T-cell (primary cell): ENCODE measurements at regions of chr9 and their contacts with region 1.

Region 1: GRCh38 chr9:37496020-37496419 is 10.3 kb downstream of the POLR1E start:
- DNase-seq: no peak
- ATAC-seq: no peak
- H3K4me3 ChIP-seq: no peak overlapping the region
- H3K4me3 Mint-ChIP-seq: no peak overlapping the region
- H3K27ac ChIP-seq: no peak overlapping the region
- H3K27ac Mint-ChIP-seq: no peak overlapping the region
- H3K4me1 ChIP-seq: no peaks in the 10 kb centered on the region
- H3K4me1 Mint-ChIP-seq: peaks cover under 1 to 1% (median 1%) of the 10 kb centered on the region in 3 donors
- H3K27me3 ChIP-seq: no peaks in the 10 kb centered on the region
- H3K27me3 Mint-ChIP-seq: no peaks in the 10 kb centered on the region

Region 2: DNA sequence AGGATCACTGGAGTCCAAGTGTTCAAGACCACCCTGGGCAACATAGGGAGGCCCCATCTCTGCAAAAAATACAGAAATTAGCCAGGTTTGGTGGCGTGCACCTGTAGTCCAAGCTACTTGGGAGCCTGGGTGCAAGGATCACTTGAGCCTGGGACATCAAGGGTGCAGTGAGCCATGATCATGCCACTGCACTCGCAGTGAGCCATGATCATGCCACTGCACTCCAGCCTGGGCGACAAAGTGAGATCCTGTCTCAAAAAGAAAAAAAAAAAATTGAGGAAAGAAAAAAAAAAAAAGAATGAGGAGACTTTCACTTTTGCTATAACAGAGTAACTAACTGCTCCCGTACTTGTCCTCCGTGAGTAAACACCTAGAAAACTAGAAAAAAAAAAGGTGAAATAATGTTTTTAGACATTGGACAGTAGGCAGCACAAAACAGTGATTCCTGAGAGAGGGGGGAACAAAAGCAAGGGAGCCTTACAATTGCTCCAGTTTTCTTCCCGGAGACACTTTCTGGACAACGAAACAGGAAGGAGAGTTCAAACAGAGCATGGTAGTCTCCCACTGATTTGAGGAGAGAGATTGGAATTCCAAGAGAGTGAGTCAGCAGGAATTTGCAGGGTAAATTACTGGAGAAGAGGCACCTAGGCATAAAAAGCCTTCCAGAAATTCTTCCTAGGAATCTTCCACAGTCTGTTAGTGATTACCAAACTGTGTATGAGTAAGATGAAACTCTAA is 23.9 kb before region 1 on chr9:
- CTCF ChIA-PET with region 1: no interaction called
- POLR2A ChIA-PET with region 1: no interaction called
- DNase-seq: no peak
- ATAC-seq: peak in 2 of 4 experiments; percentile 29 to 44
- H3K4me3 ChIP-seq: peak overlapping the region in 1 of 2 donors; percentile 10
- H3K4me3 Mint-ChIP-seq: peak overlapping the region; percentile 71 to 78 (median 76)
- H3K27ac ChIP-seq: no peak overlapping the region
- H3K27ac Mint-ChIP-seq: peak overlapping the region; percentile 81 to 85
- H3K4me1 ChIP-seq: peaks cover 0 to 4% of the 10 kb centered on the region in 2 experiments
- H3K4me1 Mint-ChIP-seq: peaks cover 12 to 15% (median 14%) of the 10 kb centered on the region in 3 donors
- H3K27me3 ChIP-seq: peaks cover 0 to 8% of the 10 kb centered on the region in 2 experiments
- H3K27me3 Mint-ChIP-seq: peaks cover 6% of the 10 kb centered on the region in 2 donors

Region 3: DNA sequence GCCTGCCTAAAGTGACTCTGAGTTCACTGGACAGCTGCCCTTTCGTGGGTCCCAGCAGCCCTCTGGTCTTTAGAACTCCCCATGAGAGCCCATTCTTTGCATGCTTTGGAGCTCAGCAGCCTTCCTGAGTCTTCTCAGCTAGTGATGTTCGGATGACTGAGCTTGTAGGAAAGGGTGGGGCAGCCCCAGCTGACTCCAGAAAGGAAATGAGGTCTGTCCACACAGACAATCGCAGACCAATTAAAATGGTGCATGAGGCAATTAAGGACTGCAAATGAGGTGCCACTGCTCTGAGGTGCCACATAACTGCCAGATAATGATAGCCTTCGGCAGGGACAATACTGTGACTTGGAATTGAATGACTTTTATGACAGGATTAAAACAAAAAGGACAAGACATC is 121.8 kb after region 1 on chr9:
- CTCF ChIA-PET with region 1: no interaction called
- POLR2A ChIA-PET with region 1: interaction called in 1 of 2 experiments, 14 read pairs
- DNase-seq: no peak
- ATAC-seq: no peak
- H3K4me3 ChIP-seq: no peak overlapping the region
- H3K4me3 Mint-ChIP-seq: no peak overlapping the region
- H3K27ac ChIP-seq: no peak overlapping the region
- H3K27ac Mint-ChIP-seq: no peak overlapping the region
- H3K4me1 ChIP-seq: no peaks in the 10 kb centered on the region
- H3K4me1 Mint-ChIP-seq: no peaks in the 10 kb centered on the region
- H3K27me3 ChIP-seq: no peaks in the 10 kb centered on the region
- H3K27me3 Mint-ChIP-seq: peaks cover 0 to 14% of the 10 kb centered on the region in 2 donors

Region 4: DNA sequence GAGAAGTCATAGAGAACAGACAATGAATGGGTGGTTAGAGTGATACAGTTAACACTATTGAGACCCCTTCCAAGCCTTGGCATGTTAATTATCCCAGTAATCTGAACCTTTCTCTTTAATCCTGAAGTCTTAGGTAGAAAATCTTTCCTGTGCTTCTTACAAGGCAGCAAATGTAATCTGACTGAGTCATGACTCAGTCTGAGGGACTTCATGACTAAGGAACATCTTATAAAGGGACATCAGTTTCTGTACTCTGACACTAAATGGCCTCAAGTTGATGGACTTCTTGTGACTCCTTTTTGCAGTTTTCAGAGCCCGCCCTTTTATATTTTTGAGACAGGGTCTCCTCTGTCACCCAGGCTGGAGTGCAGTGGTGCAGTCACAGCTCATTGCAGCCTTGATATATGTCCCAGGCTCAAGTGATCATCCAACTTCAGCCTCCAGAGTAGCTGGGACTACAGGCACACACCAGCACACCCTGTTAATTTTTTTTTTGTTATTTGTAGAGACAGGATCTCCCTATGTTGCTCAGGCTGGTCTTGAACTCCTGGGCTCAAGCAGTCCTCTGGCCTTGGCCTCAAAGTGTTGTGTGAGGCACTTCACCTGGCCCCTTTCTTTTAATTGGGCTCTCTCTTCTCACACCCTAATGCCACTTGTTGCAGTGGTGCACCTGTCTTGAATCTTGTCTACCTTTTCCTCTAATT is 279.3 kb after region 1 on chr9:
- CTCF ChIA-PET with region 1: no interaction called
- POLR2A ChIA-PET with region 1: interaction called in 1 of 2 experiments, 11 read pairs
- DNase-seq: no peak
- ATAC-seq: no peak
- H3K4me3 ChIP-seq: no peak overlapping the region
- H3K4me3 Mint-ChIP-seq: no peak overlapping the region
- H3K27ac ChIP-seq: no peak overlapping the region
- H3K27ac Mint-ChIP-seq: peak overlapping the region in 1 of 2 donors; percentile 5
- H3K4me1 ChIP-seq: no peaks in the 10 kb centered on the region
- H3K4me1 Mint-ChIP-seq: peaks cover under 1 to 5% (median 2%) of the 10 kb centered on the region in 3 donors
- H3K27me3 ChIP-seq: no peaks in the 10 kb centered on the region
- H3K27me3 Mint-ChIP-seq: no peaks in the 10 kb centered on the region